Right cardiac atrium (tissue), 5 donors: ENCODE measurements at regions of chr5 and their contacts with region 1.

Region 1: DNA sequence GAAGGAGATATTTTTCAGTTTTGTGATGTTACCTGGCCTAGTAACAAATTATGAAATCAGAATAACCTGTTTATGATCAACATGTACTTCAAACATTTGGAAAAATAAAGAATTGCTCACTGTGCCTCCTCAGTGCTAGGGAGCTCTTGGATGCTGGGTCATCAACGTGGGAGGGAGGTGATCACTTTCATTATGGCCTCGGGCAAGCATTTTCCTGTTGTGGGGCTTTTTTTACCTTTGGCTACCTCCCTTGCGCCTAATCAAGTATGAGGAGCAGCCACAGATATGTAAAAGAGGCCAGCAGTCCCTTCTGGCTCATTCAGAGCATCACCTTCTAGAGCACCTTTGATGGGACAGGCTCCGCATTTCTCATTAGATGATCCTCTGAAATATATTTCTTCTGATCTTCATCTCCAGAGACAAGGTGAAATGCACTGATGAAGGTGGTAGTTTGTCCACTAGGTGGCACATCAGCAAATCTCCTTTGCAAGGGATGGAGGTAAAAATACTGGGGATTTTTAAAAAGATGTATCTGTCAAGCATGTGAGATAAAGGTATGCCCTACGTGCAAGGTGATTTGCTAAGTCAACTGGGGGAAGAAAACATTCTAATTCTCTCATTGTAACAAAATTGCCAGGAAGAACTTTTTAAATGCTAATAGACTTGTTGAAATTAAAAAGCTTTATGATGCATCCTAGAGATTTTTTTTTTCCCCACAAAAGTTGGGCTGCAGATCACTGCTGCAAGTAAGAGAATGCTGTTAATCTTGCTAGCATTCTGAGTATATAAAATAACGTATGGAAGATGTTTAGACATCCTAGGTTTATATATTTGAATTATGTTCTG is 218.2 kb downstream of the MAST4 start:
- DNase-seq: no peak
- ATAC-seq: peak in 1 of 2 donors; percentile 35
- H3K4me3 ChIP-seq: no peak overlapping the region
- H3K27ac ChIP-seq: no peak overlapping the region
- H3K4me1 ChIP-seq: peaks cover 2% of the 10 kb centered on the region
- H3K27me3 ChIP-seq: no peaks in the 10 kb centered on the region

Region 2: GRCh38 chr5:66609615-66610014 is 204.8 kb before region 1 on chr5:
- intact Hi-C with region 1: no loop called
- DNase-seq: no peak
- ATAC-seq: no peak
- H3K4me3 ChIP-seq: no peak overlapping the region
- H3K27ac ChIP-seq: no peak overlapping the region
- H3K4me1 ChIP-seq: no peaks in the 10 kb centered on the region
- H3K27me3 ChIP-seq: no peaks in the 10 kb centered on the region

Region 3: GRCh38 chr5:66747607-66748006 is 66.8 kb before region 1 on chr5:
- intact Hi-C with region 1: no loop called
- DNase-seq: no peak
- ATAC-seq: no peak
- H3K4me3 ChIP-seq: no peak overlapping the region
- H3K27ac ChIP-seq: no peak overlapping the region
- H3K4me1 ChIP-seq: peaks cover 8% of the 10 kb centered on the region
- H3K27me3 ChIP-seq: no peaks in the 10 kb centered on the region

Region 4: DNA sequence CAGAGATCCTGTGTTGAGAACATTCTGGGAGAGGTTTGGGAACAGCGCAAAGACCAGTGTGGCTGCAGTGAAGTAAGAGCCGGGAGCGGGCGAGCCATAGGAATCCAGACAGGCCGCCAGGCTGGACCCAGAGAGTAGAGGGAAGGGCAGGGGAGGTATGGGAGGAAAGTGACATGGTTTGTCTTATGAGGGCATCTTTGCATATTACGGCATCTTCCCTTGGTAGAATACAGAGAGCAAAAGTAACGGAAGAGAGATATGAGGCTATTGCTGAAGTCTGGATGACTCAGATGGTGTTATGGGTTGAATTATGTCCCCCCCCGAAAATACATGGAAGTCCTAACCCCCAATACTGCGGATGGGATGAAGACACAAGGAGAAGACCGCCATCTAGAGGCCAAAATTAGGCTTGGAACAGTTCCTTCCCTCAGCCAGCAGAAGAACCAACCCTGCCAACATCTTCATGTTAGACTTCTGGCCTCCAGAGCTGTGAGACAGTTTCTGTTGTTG is 50.0 kb after region 1 on chr5:
- intact Hi-C with region 1: loop called in 3 of 4 experiments (anchors 5 to 10 kb)
- DNase-seq: peak in 1 of 3 donors; percentile 18
- ATAC-seq: peak; percentile 50 to 63
- H3K4me3 ChIP-seq: no peak overlapping the region
- H3K27ac ChIP-seq: no peak overlapping the region
- H3K4me1 ChIP-seq: peaks cover 4% of the 10 kb centered on the region
- H3K27me3 ChIP-seq: no peaks in the 10 kb centered on the region

Region 5: GRCh38 chr5:67156976-67157583 is 342.7 kb after region 1 on chr5:
- intact Hi-C with region 1: loop called in 1 of 4 experiments (anchors 10 kb)
- DNase-seq: peak in 1 of 3 donors; percentile 64
- ATAC-seq: no peak
- H3K4me3 ChIP-seq: no peak overlapping the region
- H3K27ac ChIP-seq: no peak overlapping the region
- H3K4me1 ChIP-seq: no peaks in the 10 kb centered on the region
- H3K27me3 ChIP-seq: no peaks in the 10 kb centered on the region